A673 (cell line): ENCODE measurements at regions of chr5 and their contacts with region 1.

Region 1: GRCh38 chr5:148826053-148826738 is at the start of gene ADRB2:
- DNase-seq: peak; percentile 87
- H3K4me3 ChIP-seq: peak within 1 kb of the TSS; percentile 41
- H3K27ac ChIP-seq: no peak within 1 kb of the TSS
- H3K4me1 ChIP-seq: peaks cover 4% of the 10 kb centered on the region
- H3K27me3 ChIP-seq: peaks cover 57% of the 10 kb centered on the region
- CTCF ChIP-seq: no peak
- total RNA-seq, gene ADRB2: not detected in 2 replicates

Region 2: GRCh38 chr5:148998174-148998797 is 172.1 kb after region 1 on chr5:
- CTCF ChIA-PET with region 1: no interaction called
- POLR2A ChIA-PET with region 1: no interaction called
- intact Hi-C with region 1: loop called (anchors 10 kb)
- DNase-seq: peak; percentile 64
- H3K4me3 ChIP-seq: no peak overlapping the region
- H3K27ac ChIP-seq: no peak overlapping the region
- H3K4me1 ChIP-seq: peaks cover 6% of the 10 kb centered on the region
- H3K27me3 ChIP-seq: no peaks in the 10 kb centered on the region
- CTCF ChIP-seq: peak; percentile 70